IMR-90 (cell line): ENCODE measurements at regions of chr7 and their contacts with region 1.

Region 1: DNA sequence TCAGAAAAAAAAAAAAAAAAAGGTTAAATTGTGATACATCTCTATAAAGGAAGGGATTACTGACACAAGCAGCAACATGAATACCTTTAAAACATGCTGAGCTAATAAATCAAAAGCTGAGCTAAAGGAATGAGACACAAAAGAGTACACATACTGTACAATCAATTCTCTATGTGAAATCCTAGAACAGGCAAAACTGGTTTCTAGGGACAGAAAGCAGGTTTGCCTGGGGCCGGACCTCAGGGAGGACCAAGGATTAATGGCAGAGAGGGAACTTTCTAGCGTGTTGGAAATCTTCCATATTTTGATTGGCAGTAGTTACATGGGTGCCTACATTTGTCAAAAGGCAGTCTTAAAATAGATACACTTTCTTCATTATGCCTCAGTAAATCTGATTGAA is 52.5 kb downstream of the KLRG2 start:
- DNase-seq: no peak
- ATAC-seq: no peak
- H3K4me3 ChIP-seq: no peak overlapping the region
- H3K27ac ChIP-seq: no peak overlapping the region
- H3K4me1 ChIP-seq: no peaks in the 10 kb centered on the region; the same call in 1 of the 2 replicates
- H3K27me3 ChIP-seq: no peaks in the 10 kb centered on the region
- CTCF ChIP-seq: no peak
- POLR2A ChIP-seq: no peak
- RAD21 ChIP-seq: no peak

Region 2: GRCh38 chr7:139452958-139453672 is 22.1 kb after region 1 on chr7:
- CTCF ChIA-PET with region 1: interaction called, 11 read pairs
- POLR2A ChIA-PET with region 1: interaction called, 6 read pairs
- dilution Hi-C with region 1: no loop called
- in situ Hi-C with region 1: no loop called
- intact Hi-C with region 1: no loop called
- DNase-seq: peak; percentile 80
- ATAC-seq: peak; percentile 80
- H3K4me3 ChIP-seq: no peak overlapping the region
- H3K27ac ChIP-seq: no peak overlapping the region
- H3K4me1 ChIP-seq: peaks cover 4% of the 10 kb centered on the region; the same call in 1 of the 2 replicates
- H3K27me3 ChIP-seq: no peaks in the 10 kb centered on the region
- CTCF ChIP-seq: 0 out of 2 replicates have a peak, but pooled peaks have one; percentile 5
- POLR2A ChIP-seq: no peak
- RAD21 ChIP-seq: no peak